ENCODE measurements at regions of chr12 and their contacts with region 1.

Region 1: GRCh38 chr12:102503056-102503681 is 22.8 kb upstream of the IGF1 start:
- DNase-seq: peak; percentile 55
- ATAC-seq: peak; percentile 95
- H3K4me3 ChIP-seq: no peak overlapping the region; the same call in 1 of the 2 replicates
- H3K27ac ChIP-seq: peak overlapping the region; percentile 32; the same call in 1 of the 2 replicates
- H3K4me1 ChIP-seq: peaks cover 13% of the 10 kb centered on the region; the same call in 1 of the 2 replicates
- H3K27me3 ChIP-seq: no peaks in the 10 kb centered on the region
- CTCF ChIP-seq: no peak
- EP300 ChIP-seq: peak in 1 of 2 experiments; percentile 54; a peak in 1 of 4 replicates
- POLR2A ChIP-seq: no peak
- RAD21 ChIP-seq: no peak

Region 2: GRCh38 chr12:102522768-102523167 is 19.6 kb after region 1 on chr12:
- CTCF ChIA-PET with region 1: no interaction called
- POLR2A ChIA-PET with region 1: no interaction called
- RAD21 ChIA-PET with region 1: interaction called, 6 read pairs
- SMC1A ChIA-PET with region 1: interaction called, 10 read pairs
- in situ Hi-C with region 1: no loop called
- intact Hi-C with region 1: no loop called
- DNase-seq: no peak
- ATAC-seq: no peak
- H3K4me3 ChIP-seq: no peak overlapping the region
- H3K27ac ChIP-seq: no peak overlapping the region
- H3K4me1 ChIP-seq: 0 out of 2 replicates have a peak, but pooled peaks cover 2% of the 10 kb centered on the region
- H3K27me3 ChIP-seq: no peaks in the 10 kb centered on the region
- CTCF ChIP-seq: no peak
- EP300 ChIP-seq: no peak
- POLR2A ChIP-seq: no peak
- RAD21 ChIP-seq: no peak

Region 3: GRCh38 chr12:102609996-102610395 is 106.8 kb after region 1 on chr12:
- CTCF ChIA-PET with region 1: no interaction called
- POLR2A ChIA-PET with region 1: no interaction called
- RAD21 ChIA-PET with region 1: no interaction called
- SMC1A ChIA-PET with region 1: no interaction called
- in situ Hi-C with region 1: no loop called
- intact Hi-C with region 1: no loop called
- DNase-seq: no peak
- ATAC-seq: no peak
- H3K4me3 ChIP-seq: no peak overlapping the region
- H3K27ac ChIP-seq: no peak overlapping the region
- H3K4me1 ChIP-seq: no peaks in the 10 kb centered on the region
- H3K27me3 ChIP-seq: no peaks in the 10 kb centered on the region
- CTCF ChIP-seq: no peak
- EP300 ChIP-seq: no peak
- POLR2A ChIP-seq: no peak
- RAD21 ChIP-seq: no peak